Activated CD4-positive, alpha-beta memory T cell treated with anti-CD3 and anti-CD28 coated beads for 36 hours (primary cell): ENCODE measurements at regions of chr14 and their contacts with region 1.

Region 1: DNA sequence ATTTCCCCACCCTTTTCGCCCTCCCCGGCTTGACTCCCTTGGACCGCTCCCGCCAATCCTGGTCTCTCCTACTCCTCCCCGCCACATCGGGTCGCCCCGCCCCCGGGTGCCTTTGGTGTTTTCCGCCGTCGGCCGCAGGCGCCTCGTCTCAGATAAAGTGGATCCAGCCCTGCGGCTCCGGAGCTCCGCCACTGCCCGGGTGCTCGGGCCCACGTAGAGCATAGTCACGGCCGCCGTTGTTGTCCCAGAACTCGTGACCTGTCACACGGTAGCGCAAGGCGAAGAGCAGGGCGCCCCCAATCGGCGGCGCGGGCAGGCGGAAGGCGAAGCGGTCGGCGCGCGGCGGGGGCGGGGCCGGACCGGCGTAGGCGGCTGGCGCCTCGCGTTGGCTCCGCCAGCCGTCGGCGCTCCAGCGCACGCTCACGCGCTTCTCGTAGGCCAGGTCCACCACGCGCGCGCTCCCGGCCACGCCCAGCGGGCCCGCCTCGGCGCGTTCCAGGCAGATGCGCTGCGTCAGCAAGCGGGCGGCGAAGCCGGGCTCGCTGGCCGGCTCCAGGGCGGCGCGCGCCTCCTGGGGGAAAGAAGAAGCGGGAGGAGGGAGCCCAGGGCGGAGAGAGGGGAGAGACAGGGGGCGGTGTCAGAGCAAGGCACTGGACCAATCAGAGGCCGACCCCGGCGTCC is 1.2 kb downstream of the PPP1R3E start:
- DNase-seq: peak; percentile 98
- H3K4me3 Mint-ChIP-seq: peak overlapping the region; percentile 94
- H3K27ac Mint-ChIP-seq: peak overlapping the region; percentile 94
- H3K4me1 Mint-ChIP-seq: peaks cover 22% of the 10 kb centered on the region
- H3K27me3 Mint-ChIP-seq: peaks cover 5% of the 10 kb centered on the region

Region 2: GRCh38 chr14:22850944-22851764 is 450.3 kb before region 1 on chr14:
- CTCF ChIA-PET with region 1: no interaction called
- POLR2A ChIA-PET with region 1: no interaction called
- intact Hi-C with region 1: no loop called
- DNase-seq: peak; percentile 76
- H3K4me3 Mint-ChIP-seq: no peak overlapping the region
- H3K27ac Mint-ChIP-seq: peak overlapping the region; percentile 51
- H3K4me1 Mint-ChIP-seq: peaks cover 21% of the 10 kb centered on the region
- H3K27me3 Mint-ChIP-seq: peaks cover 3% of the 10 kb centered on the region

Region 3: GRCh38 chr14:23095196-23096108 is 206.0 kb before region 1 on chr14 and contains the start of gene C14orf119:
- CTCF ChIA-PET with region 1: interaction called, 11 read pairs
- POLR2A ChIA-PET with region 1: interaction called, 10 read pairs
- intact Hi-C with region 1: loop called (anchors 1 kb)
- DNase-seq: peak; percentile 100
- H3K4me3 Mint-ChIP-seq: no peak within 1 kb of the TSS
- H3K27ac Mint-ChIP-seq: no peak within 1 kb of the TSS
- H3K4me1 Mint-ChIP-seq: peaks cover 40% of the 10 kb centered on the region
- H3K27me3 Mint-ChIP-seq: no peaks in the 10 kb centered on the region
- total RNA-seq, gene C14orf119: 58.0 to 62.8 TPM

Region 4: DNA sequence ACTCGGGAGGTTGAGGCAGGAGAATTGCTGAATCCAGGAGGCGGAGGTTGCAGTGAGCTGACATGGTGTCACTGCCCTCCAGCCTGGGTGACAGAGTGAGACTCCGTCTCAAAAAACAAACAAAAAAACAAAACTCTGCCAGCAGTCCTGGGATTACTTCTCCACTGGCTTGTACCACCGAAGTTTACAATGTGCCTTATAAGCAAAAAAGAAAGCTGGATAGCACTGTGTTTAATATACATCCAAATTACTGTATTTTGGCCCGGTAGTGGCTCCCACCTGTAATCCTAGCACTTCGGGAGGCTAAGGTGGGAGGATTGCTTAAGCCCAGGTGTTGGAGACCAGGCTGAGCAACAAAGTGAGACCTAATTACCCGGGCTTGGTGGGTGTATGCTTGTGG is 32.2 kb before region 1 on chr14:
- CTCF ChIA-PET with region 1: interaction called, 4 read pairs
- POLR2A ChIA-PET with region 1: no interaction called
- intact Hi-C with region 1: loop called (anchors 1 kb)
- DNase-seq: no peak
- H3K4me3 Mint-ChIP-seq: no peak overlapping the region
- H3K27ac Mint-ChIP-seq: no peak overlapping the region
- H3K4me1 Mint-ChIP-seq: no peaks in the 10 kb centered on the region
- H3K27me3 Mint-ChIP-seq: peaks cover 4% of the 10 kb centered on the region

Region 5: DNA sequence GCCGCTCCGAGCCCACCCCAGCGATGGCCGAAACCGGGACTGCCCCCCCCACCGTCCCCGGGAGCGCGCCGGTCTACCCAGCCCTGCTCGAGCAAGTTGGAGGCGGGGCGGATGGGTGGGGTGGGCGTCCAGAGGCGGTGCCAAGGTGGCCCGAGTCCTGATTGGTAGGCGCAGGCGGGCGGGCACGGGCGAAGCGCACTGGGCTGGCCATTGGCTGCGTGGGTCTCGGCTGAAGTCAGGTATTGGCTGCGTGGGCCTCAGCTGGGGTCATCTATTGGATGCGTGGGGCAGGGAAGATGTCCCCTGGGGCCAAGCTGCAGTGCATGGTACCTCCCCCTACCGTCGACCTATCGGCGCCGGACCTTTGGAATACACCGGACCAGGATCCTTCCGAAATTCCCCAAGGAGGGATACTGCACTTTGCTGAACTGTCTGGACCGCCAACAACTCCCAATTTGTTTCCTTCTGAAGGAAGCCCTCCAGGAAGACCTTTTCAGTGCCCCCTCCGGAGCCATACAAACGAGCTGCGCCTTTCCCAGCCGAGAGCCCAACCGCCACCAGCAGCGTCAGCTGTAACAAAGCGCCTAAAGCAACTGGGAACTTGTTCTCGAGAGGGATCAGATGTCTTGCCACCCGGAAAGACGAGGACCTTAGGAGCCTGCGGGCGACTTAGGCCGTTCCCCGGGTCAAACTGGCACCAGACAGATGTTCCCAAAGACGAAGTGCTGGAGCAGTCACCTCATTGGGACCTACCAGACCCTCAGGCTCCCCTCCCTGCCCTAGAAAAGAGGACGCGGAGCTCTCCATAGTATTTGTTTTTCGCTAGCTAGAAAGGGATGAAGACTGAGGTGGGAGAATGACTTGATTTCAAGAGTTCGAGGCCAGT is 15.2 kb before region 1 on chr14 and contains the start of gene HOMEZ:
- CTCF ChIA-PET with region 1: interaction called, 60 read pairs
- POLR2A ChIA-PET with region 1: interaction called, 31 read pairs
- intact Hi-C with region 1: loop called (anchors 1 kb)
- DNase-seq: peak; percentile 99
- H3K4me3 Mint-ChIP-seq: peak within 1 kb of the TSS; percentile 89
- H3K27ac Mint-ChIP-seq: peak within 1 kb of the TSS; percentile 87
- H3K4me1 Mint-ChIP-seq: peaks cover 25% of the 10 kb centered on the region
- H3K27me3 Mint-ChIP-seq: no peaks in the 10 kb centered on the region
- total RNA-seq, gene HOMEZ: 12.3 to 13.0 TPM

Region 6: DNA sequence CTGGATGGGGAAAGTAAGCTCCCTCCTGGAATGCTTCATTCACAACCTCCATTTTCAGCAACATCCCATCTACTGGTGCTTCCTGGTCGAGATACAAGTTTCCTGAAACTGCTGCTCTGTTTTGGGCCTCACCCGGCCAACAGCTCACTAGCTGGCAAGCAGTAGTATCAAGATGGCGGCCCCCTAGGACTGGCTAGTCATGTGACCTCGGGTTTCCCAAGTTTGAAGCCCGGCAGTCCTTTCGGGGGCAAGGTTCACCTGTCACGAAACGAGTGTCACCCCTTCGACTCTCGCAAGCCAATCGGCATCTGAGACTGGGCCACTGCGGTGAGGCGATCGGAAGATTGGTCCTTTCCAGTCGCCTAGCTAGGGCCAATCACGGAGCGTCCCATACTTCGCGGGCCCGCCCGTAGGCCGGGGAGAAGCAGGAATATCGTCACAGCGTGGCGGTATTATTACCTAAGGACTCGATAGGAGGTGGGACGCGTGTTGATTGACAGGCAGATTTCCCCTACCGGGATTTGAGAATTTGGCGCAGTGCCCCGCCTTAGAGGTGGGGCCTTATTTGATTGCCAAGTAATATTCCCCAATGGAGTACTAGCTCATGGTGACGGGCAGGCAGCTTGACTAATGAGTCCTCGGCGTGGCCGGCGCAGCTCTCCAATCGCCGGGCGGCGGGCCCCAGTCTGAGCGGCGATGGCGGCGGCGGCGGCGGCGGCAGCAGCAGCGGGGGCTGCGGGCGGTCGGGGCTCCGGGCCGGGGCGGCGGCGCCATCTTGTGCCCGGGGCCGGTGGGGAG is 19.5 kb after region 1 on chr14 and contains the start of gene PABPN1:
- CTCF ChIA-PET with region 1: interaction called, 76 read pairs
- POLR2A ChIA-PET with region 1: interaction called, 102 read pairs
- intact Hi-C with region 1: loop called (anchors 1 kb)
- DNase-seq: peak; percentile 99
- H3K4me3 Mint-ChIP-seq: peak within 1 kb of the TSS; percentile 92
- H3K27ac Mint-ChIP-seq: peak within 1 kb of the TSS; percentile 90
- H3K4me1 Mint-ChIP-seq: peaks cover 23% of the 10 kb centered on the region
- H3K27me3 Mint-ChIP-seq: no peaks in the 10 kb centered on the region
- total RNA-seq, gene PABPN1: 198 to 209 TPM

Region 7: GRCh38 chr14:23355871-23356435 is 54.5 kb after region 1 on chr14:
- CTCF ChIA-PET with region 1: no interaction called
- POLR2A ChIA-PET with region 1: no interaction called
- intact Hi-C with region 1: no loop called
- DNase-seq: no peak
- H3K4me3 Mint-ChIP-seq: no peak overlapping the region
- H3K27ac Mint-ChIP-seq: no peak overlapping the region
- H3K4me1 Mint-ChIP-seq: peaks cover 6% of the 10 kb centered on the region
- H3K27me3 Mint-ChIP-seq: peaks cover 25% of the 10 kb centered on the region

Region 8: GRCh38 chr14:23366426-23366921 is 65.0 kb after region 1 on chr14:
- CTCF ChIA-PET with region 1: no interaction called
- POLR2A ChIA-PET with region 1: no interaction called
- intact Hi-C with region 1: loop called (anchors 2 kb)
- DNase-seq: no peak
- H3K4me3 Mint-ChIP-seq: no peak overlapping the region
- H3K27ac Mint-ChIP-seq: no peak overlapping the region
- H3K4me1 Mint-ChIP-seq: peaks cover 4% of the 10 kb centered on the region
- H3K27me3 Mint-ChIP-seq: peaks cover 27% of the 10 kb centered on the region

Region 9: GRCh38 chr14:23469127-23469905 is 167.9 kb after region 1 on chr14 and contains the start of gene NGDN:
- CTCF ChIA-PET with region 1: no interaction called
- POLR2A ChIA-PET with region 1: no interaction called
- intact Hi-C with region 1: loop called (anchors 1 kb)
- DNase-seq: peak; percentile 95
- H3K4me3 Mint-ChIP-seq: no peak within 1 kb of the TSS
- H3K27ac Mint-ChIP-seq: no peak within 1 kb of the TSS
- H3K4me1 Mint-ChIP-seq: peaks cover 6% of the 10 kb centered on the region
- H3K27me3 Mint-ChIP-seq: no peaks in the 10 kb centered on the region
- total RNA-seq, gene NGDN: 42.1 to 44.1 TPM